MCF 10A (cell line): ENCODE measurements at regions of chr12 and their contacts with region 1.

Region 1: GRCh38 chr12:120064054-120064940 is 52.3 kb downstream of the RAB35 start:
- DNase-seq: no peak
- H3K4me3 Mint-ChIP-seq: no peak overlapping the region
- H3K27ac Mint-ChIP-seq: no peak overlapping the region
- H3K4me1 Mint-ChIP-seq: peaks cover 29% of the 10 kb centered on the region
- H3K27me3 Mint-ChIP-seq: no peaks in the 10 kb centered on the region
- CTCF ChIP-seq: no peak

Region 2: GRCh38 chr12:120041386-120042231 is 22.7 kb before region 1 on chr12:
- CTCF ChIA-PET with region 1: interaction called, 3 read pairs
- POLR2A ChIA-PET with region 1: interaction called, 45 read pairs
- intact Hi-C with region 1: no loop called
- DNase-seq: peak; percentile 35
- H3K4me3 Mint-ChIP-seq: no peak overlapping the region
- H3K27ac Mint-ChIP-seq: peak overlapping the region; percentile 82
- H3K4me1 Mint-ChIP-seq: peaks cover 21% of the 10 kb centered on the region
- H3K27me3 Mint-ChIP-seq: no peaks in the 10 kb centered on the region
- CTCF ChIP-seq: no peak

Region 3: DNA sequence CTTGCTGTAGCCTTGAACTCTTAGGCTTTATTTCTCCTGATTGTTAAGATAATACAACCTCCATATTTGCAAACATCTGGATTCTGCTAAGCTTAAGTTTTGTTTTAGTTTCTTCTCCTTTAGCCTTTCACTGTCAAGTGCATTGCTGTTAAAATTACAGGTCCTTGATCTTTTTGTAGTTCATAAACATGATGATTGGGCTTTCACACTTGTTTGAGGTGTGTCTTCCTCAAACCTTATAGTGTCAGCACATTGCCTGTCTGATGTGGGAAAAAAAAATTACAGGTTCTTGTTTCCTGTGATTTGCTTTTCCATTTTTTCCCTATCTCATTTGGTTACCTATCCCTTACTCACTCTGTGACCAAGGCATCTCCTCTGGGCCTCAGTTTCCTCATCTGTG is 16.0 kb before region 1 on chr12:
- CTCF ChIA-PET with region 1: interaction called, 3 read pairs
- POLR2A ChIA-PET with region 1: interaction called, 45 read pairs
- intact Hi-C with region 1: no loop called
- DNase-seq: no peak
- H3K4me3 Mint-ChIP-seq: no peak overlapping the region
- H3K27ac Mint-ChIP-seq: no peak overlapping the region
- H3K4me1 Mint-ChIP-seq: peaks cover 16% of the 10 kb centered on the region
- H3K27me3 Mint-ChIP-seq: no peaks in the 10 kb centered on the region
- CTCF ChIP-seq: no peak

Region 4: DNA sequence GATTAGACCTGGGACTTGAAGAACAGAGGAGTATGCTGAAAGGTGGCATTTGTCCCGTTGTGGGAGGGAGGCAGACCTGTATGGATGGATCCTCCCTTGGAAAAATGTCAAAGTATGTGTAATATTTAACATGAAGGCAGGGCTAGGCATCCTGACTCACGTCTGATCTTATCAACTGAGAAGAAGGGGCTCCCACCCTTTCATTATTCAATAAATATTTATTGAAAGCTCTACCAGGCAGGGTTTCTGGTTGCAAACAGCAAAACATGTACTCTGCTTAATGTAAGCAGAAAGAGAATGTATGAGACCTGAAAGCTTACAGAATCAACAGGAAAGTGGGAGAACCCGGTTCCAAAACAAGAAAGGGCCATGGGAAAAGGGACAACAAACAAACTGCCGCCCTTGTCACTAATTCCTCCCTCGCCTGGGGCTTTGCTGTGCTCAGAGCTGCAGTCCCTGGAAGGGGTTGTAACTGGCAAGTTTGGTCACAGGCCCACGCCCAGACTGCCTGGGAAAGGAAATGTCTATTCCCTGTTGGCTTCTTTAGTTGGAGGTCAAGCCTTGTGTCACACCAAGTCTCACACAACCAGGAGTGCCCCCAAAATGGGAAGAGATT is 15.2 kb after region 1 on chr12:
- CTCF ChIA-PET with region 1: interaction called, 5 read pairs
- POLR2A ChIA-PET with region 1: interaction called, 11 read pairs
- intact Hi-C with region 1: no loop called
- DNase-seq: peak; percentile 43
- H3K4me3 Mint-ChIP-seq: no peak overlapping the region
- H3K27ac Mint-ChIP-seq: peak overlapping the region; percentile 6
- H3K4me1 Mint-ChIP-seq: peaks cover 15% of the 10 kb centered on the region
- H3K27me3 Mint-ChIP-seq: no peaks in the 10 kb centered on the region
- CTCF ChIP-seq: no peak

Region 5: GRCh38 chr12:120086801-120087621 is 22.7 kb after region 1 on chr12:
- CTCF ChIA-PET with region 1: interaction called, 3 read pairs
- POLR2A ChIA-PET with region 1: interaction called, 12 read pairs
- intact Hi-C with region 1: loop called (anchors 2 kb)
- DNase-seq: peak; percentile 98
- H3K4me3 Mint-ChIP-seq: peak overlapping the region; percentile 70
- H3K27ac Mint-ChIP-seq: peak overlapping the region; percentile 79
- H3K4me1 Mint-ChIP-seq: peaks cover 23% of the 10 kb centered on the region
- H3K27me3 Mint-ChIP-seq: no peaks in the 10 kb centered on the region
- CTCF ChIP-seq: peak; percentile 95

Region 6: GRCh38 chr12:120100435-120101029 is 36.2 kb after region 1 on chr12:
- CTCF ChIA-PET with region 1: no interaction called
- POLR2A ChIA-PET with region 1: no interaction called
- intact Hi-C with region 1: no loop called
- DNase-seq: no peak
- H3K4me3 Mint-ChIP-seq: no peak overlapping the region
- H3K27ac Mint-ChIP-seq: no peak overlapping the region
- H3K4me1 Mint-ChIP-seq: peaks cover 7% of the 10 kb centered on the region
- H3K27me3 Mint-ChIP-seq: no peaks in the 10 kb centered on the region
- CTCF ChIP-seq: no peak